ENCODE measurements at regions of chr10 and their contacts with region 1.

Region 1: DNA sequence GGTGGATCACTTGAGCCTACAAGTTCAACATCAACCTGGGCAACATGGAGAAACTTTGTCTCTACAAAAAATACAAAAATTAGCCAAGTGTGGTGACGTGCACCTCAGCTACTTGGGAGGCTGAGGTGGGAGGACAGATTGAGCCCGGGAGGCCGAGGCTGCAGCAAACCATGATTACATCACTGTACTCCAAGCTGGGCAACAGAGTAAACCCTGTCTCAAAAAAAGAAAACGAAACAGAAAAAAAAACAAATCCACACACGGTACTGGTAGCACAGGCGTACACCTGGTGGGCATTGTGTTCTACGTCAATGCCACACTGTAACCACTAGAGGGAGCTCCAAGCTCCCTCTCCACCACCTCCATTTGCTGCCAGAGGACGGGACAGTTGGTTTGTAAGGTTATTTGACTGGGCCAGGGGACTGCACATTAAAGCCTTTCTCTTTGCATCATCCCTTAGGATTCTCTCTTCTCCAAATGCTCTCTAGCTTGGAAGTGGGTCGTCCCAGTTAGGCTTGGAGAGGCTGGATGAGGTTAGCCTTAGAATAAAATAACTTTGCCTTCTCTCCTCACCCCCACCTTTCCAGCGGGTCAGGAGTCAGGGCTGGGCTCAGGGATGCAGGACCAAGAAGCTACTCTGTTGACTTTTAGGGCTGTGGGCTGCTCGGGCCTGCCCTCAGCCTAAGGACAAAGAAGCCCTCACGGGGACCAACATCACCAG is 130.8 kb downstream of the SORBS1 start:
- DNase-seq: peak; percentile 15
- H3K4me3 ChIP-seq: no peak overlapping the region
- H3K27ac ChIP-seq: peak overlapping the region; percentile 11
- H3K27me3 ChIP-seq: peaks cover 11% of the 10 kb centered on the region
- CTCF ChIP-seq: peak; percentile 95

Region 2: DNA sequence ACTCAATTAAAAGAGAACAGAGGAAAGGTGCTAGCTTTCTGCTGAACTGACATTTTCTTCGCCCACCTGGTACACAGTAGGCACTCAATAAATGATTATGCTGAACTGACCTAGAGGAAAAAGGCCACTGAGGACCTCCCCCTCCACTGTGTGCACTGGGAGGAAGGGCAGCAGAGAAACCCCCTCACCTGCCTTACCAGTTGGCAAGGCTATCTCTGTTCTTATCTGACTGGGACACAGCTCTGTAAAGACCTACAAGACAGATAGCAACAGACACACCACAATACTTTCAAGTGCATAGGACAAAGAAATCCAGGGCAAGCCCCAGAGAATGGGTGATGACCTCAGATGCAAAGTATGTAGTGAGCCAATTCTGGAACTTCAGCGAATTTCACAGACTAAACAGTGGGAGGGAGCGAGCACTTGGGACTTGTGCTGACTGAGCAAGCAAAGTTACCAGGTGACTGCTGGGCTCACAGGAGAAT is 170.0 kb before region 1 on chr10:
- CTCF ChIA-PET with region 1: interaction called, 10 read pairs
- POLR2A ChIA-PET with region 1: no interaction called
- DNase-seq: no peak
- H3K4me3 ChIP-seq: no peak overlapping the region
- H3K27ac ChIP-seq: peak overlapping the region; percentile 85
- H3K27me3 ChIP-seq: no peaks in the 10 kb centered on the region
- CTCF ChIP-seq: no peak

Region 3: DNA sequence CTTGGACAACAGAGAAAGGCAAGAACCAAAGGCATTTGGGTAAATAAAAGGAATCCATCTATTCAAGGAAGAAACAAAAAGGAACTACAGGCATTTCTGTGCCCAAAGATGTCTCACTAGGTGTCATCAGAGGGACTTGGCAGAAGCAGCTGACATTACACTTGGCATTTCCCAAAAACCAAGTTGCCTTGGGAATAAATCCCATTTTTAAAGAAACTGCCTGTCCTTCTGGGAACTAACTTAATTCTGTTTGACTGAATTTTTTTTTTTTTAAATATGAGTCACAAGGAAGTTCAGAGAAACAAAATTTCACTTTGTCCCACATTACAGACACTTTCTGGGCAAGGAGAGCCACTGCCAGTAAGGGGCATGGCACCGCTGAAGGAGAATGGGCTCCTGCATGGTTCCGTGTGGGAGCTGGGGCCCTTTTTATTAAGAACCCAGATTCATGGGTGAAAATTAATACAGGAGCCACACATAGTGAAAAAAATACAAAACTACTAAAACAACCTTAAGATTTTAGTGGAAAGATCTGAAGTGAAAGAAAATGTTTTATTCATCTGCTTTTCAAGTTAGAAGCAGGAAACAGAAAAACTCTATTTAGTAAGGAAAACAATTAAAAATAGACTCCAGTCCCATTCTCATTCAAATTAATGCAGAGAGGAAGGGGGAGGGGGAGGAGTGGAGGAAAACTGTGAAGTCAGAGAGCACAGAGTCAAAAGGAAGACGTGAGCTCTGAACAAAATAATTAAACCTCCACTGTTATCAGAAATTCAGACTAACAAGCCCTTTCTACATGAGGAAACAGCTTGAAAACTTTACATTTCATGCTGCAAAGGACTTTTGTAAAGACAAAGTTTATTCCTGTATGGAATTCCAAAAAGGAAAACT is 21.2 kb before region 1 on chr10:
- CTCF ChIA-PET with region 1: interaction called, 28 read pairs
- POLR2A ChIA-PET with region 1: no interaction called
- DNase-seq: no peak
- H3K4me3 ChIP-seq: no peak overlapping the region
- H3K27ac ChIP-seq: no peak overlapping the region
- H3K27me3 ChIP-seq: peaks cover 2% of the 10 kb centered on the region
- CTCF ChIP-seq: no peak

Region 4: GRCh38 chr10:95445837-95446486 is 15.6 kb after region 1 on chr10:
- CTCF ChIA-PET with region 1: interaction called, 118 read pairs
- POLR2A ChIA-PET with region 1: no interaction called
- DNase-seq: peak; percentile 16
- H3K4me3 ChIP-seq: no peak overlapping the region
- H3K27ac ChIP-seq: no peak overlapping the region
- H3K27me3 ChIP-seq: peaks cover 8% of the 10 kb centered on the region
- CTCF ChIP-seq: peak; percentile 77

Region 5: DNA sequence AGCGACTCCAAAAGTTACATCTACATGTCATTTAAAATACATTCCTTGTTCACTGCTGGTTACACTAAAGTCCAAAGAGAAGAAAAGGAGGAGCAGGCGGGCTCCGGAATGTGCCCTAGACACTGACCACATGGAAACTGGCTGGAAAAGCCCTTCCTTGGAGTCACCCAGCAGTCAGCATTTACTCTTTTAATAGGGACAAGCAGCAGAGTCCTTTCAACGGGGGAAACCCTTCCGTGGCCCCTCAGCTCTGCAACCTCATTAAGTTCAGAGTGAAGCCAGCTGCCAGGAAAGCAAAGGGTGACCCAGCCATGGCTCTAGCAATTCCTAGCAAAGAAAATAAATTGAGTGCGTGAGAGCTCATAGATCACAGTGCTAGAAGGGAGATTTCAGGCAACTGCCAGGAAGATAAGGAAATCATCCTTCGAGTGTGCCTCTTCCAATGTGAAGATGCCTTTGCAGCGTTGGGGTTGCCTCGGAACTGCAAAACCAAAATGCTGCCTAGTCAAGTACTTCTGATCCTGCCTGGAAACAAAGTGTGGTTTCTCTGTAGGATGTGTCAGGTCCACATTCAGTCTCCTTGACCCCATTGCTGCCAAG is 29.2 kb after region 1 on chr10:
- CTCF ChIA-PET with region 1: interaction called, 11 read pairs
- POLR2A ChIA-PET with region 1: no interaction called
- DNase-seq: no peak
- H3K4me3 ChIP-seq: no peak overlapping the region
- H3K27ac ChIP-seq: no peak overlapping the region
- H3K27me3 ChIP-seq: peaks cover 8% of the 10 kb centered on the region
- CTCF ChIP-seq: no peak